AG04449 (cell line): ENCODE measurements at regions of chr2 and their contacts with region 1.

Region 1: DNA sequence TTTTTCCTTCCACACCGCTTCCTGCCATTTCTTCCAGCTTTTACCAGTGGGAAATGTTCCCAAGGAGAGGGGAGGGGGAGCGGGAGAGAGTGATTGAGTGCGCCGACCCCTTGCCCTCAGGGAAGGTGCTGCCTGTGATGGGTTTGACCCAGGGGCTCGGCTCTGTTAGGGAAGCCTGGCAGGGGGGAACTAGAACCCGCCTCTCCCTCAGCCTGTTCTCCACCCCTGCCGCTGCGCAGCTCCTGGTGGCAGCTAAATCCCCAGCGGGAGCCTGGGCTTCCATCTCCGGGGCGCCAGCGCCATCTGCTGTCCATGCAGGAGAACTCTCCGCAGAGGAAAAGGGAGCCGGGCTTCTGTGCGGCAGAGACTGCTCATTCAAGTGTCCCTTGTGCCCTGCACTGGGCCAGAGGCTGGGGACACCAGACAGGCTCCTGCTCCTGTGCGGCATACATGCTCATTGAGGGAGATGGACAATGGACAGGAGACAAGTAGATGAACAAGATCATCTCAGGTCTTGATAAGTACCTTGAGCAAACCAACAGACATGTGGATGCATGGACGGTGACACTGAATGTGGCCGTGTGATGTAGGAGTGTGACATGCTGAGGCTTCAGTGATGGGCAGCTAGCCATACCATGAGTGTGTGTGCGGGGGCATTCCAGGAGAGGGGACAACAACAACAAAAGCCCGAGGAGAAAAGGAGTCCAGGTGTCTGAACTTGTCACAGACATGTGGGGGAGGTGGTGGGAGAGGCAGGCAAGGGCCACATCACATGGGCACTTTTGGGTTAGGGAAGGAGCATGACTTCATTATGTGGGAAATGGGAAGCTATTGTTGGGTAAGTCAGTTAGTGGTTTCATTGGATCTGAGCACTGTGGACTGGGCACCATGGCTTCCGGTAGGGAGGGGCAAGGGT is 13.3 kb downstream of the CHPF start:
- DNase-seq: no peak
- H3K4me3 ChIP-seq: peak overlapping the region; percentile 49
- CTCF ChIP-seq: peak; percentile 98

Region 2: GRCh38 chr2:219218732-219219701 is 311.3 kb before region 1 on chr2 and contains the start of gene ABCB6:
- CTCF ChIA-PET with region 1: no interaction called
- POLR2A ChIA-PET with region 1: no interaction called
- DNase-seq: no peak
- H3K4me3 ChIP-seq: peak within 1 kb of the TSS; percentile 69
- CTCF ChIP-seq: no peak

Region 3: DNA sequence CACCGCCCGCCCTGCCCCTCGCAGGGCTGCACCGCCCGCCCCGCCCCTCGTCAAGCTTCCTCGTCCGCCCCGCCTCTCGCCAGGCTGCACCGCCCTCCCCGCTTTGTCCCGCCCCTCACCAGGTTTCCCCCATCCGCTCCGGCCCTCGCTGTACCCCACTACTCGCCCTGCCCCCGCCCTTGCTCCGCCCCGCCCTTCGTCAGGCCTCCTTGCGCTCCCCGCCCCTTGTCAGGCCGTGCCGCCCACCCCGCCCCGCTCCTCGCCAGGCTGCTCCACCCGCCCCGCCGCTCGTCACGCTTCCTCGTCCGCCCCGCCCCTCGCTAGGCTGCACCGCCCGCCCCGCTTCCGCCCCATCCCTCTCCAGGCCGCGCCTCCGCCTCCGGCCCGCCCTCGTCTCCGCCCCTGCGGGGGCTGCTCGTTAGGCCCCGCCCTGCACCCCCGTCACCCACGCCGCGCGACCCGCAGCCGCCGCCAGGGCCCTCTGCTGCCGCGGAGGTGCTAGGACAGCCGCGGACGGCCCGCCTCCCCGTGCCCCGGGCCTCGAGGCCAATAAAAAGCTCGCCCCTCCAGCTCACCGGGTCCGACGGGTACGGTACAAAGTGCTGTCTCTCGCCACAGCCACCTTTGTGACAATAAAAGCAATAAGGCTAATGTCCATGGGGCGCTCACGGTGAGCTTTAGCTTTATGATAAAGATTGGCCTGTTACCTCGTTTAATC is 142.0 kb before region 1 on chr2:
- CTCF ChIA-PET with region 1: interaction called, 106 read pairs
- POLR2A ChIA-PET with region 1: no interaction called
- DNase-seq: peak; percentile 73
- H3K4me3 ChIP-seq: peak overlapping the region; percentile 56
- CTCF ChIP-seq: peak; percentile 60

Region 4: DNA sequence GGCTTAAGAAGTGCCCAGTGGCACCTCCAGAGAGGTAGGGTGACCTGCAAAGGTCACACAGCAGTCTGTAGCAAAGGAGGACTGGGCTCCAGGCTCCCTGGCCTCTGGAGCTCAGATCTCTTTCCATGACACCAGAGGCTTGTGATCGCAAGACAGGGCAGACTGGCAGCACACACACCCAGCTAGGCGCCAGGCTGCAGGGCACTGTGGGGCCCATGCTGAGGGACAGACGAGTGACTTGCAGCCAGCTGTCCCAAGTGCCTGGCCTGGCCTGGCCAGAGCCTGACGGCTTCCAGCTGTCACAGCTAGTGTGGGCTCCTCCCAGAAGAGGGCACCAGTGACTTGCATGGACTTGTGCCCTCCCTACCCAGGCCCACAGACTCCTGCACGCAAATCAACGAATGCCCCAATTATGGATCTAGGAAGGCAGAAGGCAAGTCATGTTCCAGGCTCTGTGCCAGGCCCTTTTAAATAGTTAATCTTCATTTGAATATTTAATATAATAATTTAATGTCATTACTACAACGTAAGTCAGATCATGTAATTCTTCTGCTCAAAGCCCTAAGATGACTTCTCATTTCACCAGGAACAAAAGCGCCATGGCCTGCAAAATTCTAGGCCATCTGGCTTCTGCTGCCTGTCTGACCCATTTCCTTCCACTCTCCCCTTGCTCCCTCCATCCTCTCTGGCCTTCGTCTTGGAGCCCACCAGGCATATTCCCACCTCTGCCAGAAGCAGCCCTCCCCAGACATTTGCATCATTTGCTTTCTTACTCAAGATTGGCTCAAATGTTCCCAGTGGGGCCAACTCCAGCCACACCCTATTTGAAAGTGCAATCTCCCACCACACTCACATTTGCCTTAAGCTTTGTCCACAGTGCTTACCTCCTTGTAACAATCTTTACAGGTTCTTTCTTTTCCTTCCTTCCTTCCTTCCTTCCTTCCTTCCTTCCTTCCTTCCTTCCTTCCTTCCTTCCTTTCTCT is 99.4 kb before region 1 on chr2:
- CTCF ChIA-PET with region 1: interaction called, 59 read pairs
- POLR2A ChIA-PET with region 1: no interaction called
- DNase-seq: no peak
- H3K4me3 ChIP-seq: no peak overlapping the region
- CTCF ChIP-seq: peak; percentile 48

Region 5: DNA sequence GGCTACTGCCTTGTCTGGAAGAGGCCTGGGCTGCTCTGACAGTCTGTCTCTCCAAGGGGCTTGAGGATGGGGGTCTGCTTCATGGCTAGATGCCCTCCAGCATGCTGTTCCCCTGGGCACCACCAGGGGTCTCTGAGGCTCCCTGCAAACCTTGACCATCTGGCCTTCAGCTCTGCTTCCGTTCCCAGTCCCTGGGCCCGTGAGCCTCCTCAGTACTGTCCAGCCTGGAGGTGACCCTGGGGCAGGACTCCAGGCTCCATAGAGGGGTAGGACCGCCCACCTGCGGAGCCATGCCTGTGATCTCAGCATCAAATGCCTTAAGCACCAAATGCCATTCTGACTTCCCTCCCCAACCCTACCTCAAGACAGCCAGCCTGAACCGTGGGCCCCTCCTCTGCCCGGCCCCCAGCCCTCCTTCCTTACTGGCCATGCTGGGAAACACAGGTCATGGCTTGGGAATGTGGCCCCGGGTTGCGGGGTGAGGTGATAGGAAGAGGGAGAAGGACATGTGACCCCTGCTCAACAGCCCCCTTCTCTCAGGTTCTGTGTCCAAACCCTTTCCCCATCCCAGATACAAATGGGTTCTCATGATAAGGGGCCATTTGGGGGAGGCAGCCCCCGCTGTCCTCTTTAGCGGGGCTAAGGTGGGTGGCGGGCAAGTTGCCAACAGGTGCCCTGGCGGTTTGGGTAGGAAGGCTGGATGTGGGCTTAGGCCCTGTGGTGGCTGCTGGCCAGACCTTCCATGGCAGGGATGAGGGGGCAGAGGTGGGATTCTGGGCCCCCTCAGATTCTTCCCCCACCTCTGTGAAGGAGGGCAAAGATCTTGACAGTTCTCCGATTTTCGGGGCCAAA is 70.6 kb before region 1 on chr2:
- CTCF ChIA-PET with region 1: interaction called, 33 read pairs
- POLR2A ChIA-PET with region 1: interaction called, 3 read pairs
- DNase-seq: no peak
- H3K4me3 ChIP-seq: no peak overlapping the region
- CTCF ChIP-seq: peak; percentile 96

Region 6: GRCh38 chr2:219498280-219499057 is 31.8 kb before region 1 on chr2 and contains the start of gene GMPPA:
- CTCF ChIA-PET with region 1: interaction called, 1,084 read pairs
- POLR2A ChIA-PET with region 1: interaction called, 8 read pairs
- DNase-seq: peak; percentile 95
- H3K4me3 ChIP-seq: peak within 1 kb of the TSS; percentile 75
- CTCF ChIP-seq: peak; percentile 9